Naive thymus-derived CD4-positive, alpha-beta T cell (primary cell): ENCODE measurements at regions of chr12 and their contacts with region 1.

Region 1: GRCh38 chr12:95820102-95820703 is 29.6 kb upstream of the NTN4 start:
- DNase-seq: no peak
- ATAC-seq: no peak
- H3K4me3 ChIP-seq: no peak overlapping the region
- H3K4me3 Mint-ChIP-seq: no peak overlapping the region
- H3K27ac ChIP-seq: no peak overlapping the region
- H3K27ac Mint-ChIP-seq: no peak overlapping the region
- H3K4me1 ChIP-seq: no peaks in the 10 kb centered on the region
- H3K4me1 Mint-ChIP-seq: no peaks in the 10 kb centered on the region
- H3K27me3 ChIP-seq: no peaks in the 10 kb centered on the region
- H3K27me3 Mint-ChIP-seq: peaks cover 11 to 30% (median 23%) of the 10 kb centered on the region in 5 donors

Region 2: GRCh38 chr12:95117178-95117599 is 703.0 kb before region 1 on chr12:
- CTCF ChIA-PET with region 1: interaction called, 3 read pairs
- POLR2A ChIA-PET with region 1: no interaction called
- intact Hi-C with region 1: loop called in 1 of 2 experiments (anchors 5 kb)
- DNase-seq: peak; percentile 16 to 77 (median 67)
- ATAC-seq: peak; percentile 87
- H3K4me3 ChIP-seq: no peak overlapping the region
- H3K4me3 Mint-ChIP-seq: no peak overlapping the region
- H3K27ac ChIP-seq: no peak overlapping the region
- H3K27ac Mint-ChIP-seq: no peak overlapping the region
- H3K4me1 ChIP-seq: no peaks in the 10 kb centered on the region
- H3K4me1 Mint-ChIP-seq: peaks cover 0 to 7% (median 0%) of the 10 kb centered on the region in 7 donors
- H3K27me3 ChIP-seq: no peaks in the 10 kb centered on the region
- H3K27me3 Mint-ChIP-seq: no peaks in the 10 kb centered on the region

Region 3: GRCh38 chr12:95446506-95446900 is 373.7 kb before region 1 on chr12:
- CTCF ChIA-PET with region 1: no interaction called
- POLR2A ChIA-PET with region 1: no interaction called
- intact Hi-C with region 1: no loop called
- DNase-seq: no peak
- ATAC-seq: no peak
- H3K4me3 ChIP-seq: no peak overlapping the region
- H3K4me3 Mint-ChIP-seq: peak overlapping the region in 4 of 10 donors; percentile 26 to 42 (median 31)
- H3K27ac ChIP-seq: no peak overlapping the region
- H3K27ac Mint-ChIP-seq: no peak overlapping the region
- H3K4me1 ChIP-seq: no peaks in the 10 kb centered on the region
- H3K4me1 Mint-ChIP-seq: peaks cover 0 to 9% (median 0%) of the 10 kb centered on the region in 7 donors
- H3K27me3 ChIP-seq: no peaks in the 10 kb centered on the region
- H3K27me3 Mint-ChIP-seq: peaks cover 23 to 43% (median 29%) of the 10 kb centered on the region in 5 donors

Region 4: GRCh38 chr12:95623585-95624042 is 196.6 kb before region 1 on chr12:
- CTCF ChIA-PET with region 1: no interaction called
- POLR2A ChIA-PET with region 1: no interaction called
- intact Hi-C with region 1: loop called in 1 of 2 experiments (anchors 10 kb)
- DNase-seq: no peak
- ATAC-seq: peak; percentile 61
- H3K4me3 ChIP-seq: no peak overlapping the region
- H3K4me3 Mint-ChIP-seq: no peak overlapping the region
- H3K27ac ChIP-seq: no peak overlapping the region
- H3K27ac Mint-ChIP-seq: no peak overlapping the region
- H3K4me1 ChIP-seq: no peaks in the 10 kb centered on the region
- H3K4me1 Mint-ChIP-seq: no peaks in the 10 kb centered on the region
- H3K27me3 ChIP-seq: no peaks in the 10 kb centered on the region
- H3K27me3 Mint-ChIP-seq: peaks cover 0 to 24% (median 0%) of the 10 kb centered on the region in 5 donors

Region 5: GRCh38 chr12:95998611-95999286 is 178.5 kb after region 1 on chr12:
- CTCF ChIA-PET with region 1: no interaction called
- POLR2A ChIA-PET with region 1: interaction called, 4 read pairs
- intact Hi-C with region 1: loop called in 1 of 2 experiments (anchors 2 kb)
- DNase-seq: peak in 7 of 9 donors; percentile 44 to 69 (median 58)
- ATAC-seq: peak; percentile 96
- H3K4me3 ChIP-seq: no peak overlapping the region
- H3K4me3 Mint-ChIP-seq: peak overlapping the region in 1 of 10 donors; percentile 11
- H3K27ac ChIP-seq: no peak overlapping the region
- H3K27ac Mint-ChIP-seq: peak overlapping the region in 5 of 9 donors; percentile 2 to 68 (median 16)
- H3K4me1 ChIP-seq: no peaks in the 10 kb centered on the region
- H3K4me1 Mint-ChIP-seq: peaks cover 0 to 13% (median 3%) of the 10 kb centered on the region in 7 donors
- H3K27me3 ChIP-seq: no peaks in the 10 kb centered on the region
- H3K27me3 Mint-ChIP-seq: no peaks in the 10 kb centered on the region

Region 6: DNA sequence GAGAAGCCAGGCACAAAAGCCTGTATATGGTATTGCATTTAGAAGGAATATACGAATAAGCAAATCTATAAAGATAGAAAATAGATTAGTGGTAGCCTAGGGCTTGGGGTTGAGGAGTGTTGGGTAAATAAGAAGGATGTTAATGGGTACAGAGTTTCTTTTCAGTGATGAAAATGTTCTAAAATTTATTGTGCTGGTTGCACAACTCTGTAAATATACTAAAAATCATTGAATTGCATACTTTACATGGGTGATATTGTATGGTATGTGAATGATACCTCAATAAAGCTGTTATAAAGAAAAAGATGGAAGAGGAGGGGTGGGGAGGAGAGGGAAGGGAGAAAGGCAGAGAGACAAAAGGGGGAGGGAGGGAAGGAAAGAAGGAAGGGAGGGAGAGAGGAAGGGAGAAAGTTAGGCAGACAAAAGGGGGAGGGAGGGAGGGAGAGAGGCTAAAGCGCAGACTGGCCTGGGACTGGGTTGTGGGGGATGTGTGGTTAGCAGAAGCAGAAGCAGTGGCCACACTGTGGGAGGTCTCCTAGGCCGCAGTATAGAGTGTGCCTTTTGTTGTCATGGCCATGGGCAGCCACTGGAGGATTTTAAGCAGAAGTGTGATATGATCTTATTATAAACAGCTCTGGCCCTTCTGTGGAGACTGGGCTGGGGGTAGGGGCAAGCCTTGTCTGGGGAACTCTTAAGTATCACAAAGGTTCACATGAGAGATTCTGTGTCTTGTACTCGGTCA is 300.3 kb after region 1 on chr12:
- CTCF ChIA-PET with region 1: no interaction called
- POLR2A ChIA-PET with region 1: no interaction called
- intact Hi-C with region 1: no loop called
- DNase-seq: no peak
- ATAC-seq: peak; percentile 91
- H3K4me3 ChIP-seq: no peak overlapping the region
- H3K4me3 Mint-ChIP-seq: no peak overlapping the region
- H3K27ac ChIP-seq: no peak overlapping the region
- H3K27ac Mint-ChIP-seq: no peak overlapping the region
- H3K4me1 ChIP-seq: peaks cover 0 to 6% of the 10 kb centered on the region in 2 donors
- H3K4me1 Mint-ChIP-seq: peaks cover 5 to 18% (median 12%) of the 10 kb centered on the region in 7 donors
- H3K27me3 ChIP-seq: no peaks in the 10 kb centered on the region
- H3K27me3 Mint-ChIP-seq: peaks cover 0 to 3% (median 0%) of the 10 kb centered on the region in 5 donors